PC-9 (cell line): ENCODE measurements at regions of chr1 and their contacts with region 1.

Region 1: DNA sequence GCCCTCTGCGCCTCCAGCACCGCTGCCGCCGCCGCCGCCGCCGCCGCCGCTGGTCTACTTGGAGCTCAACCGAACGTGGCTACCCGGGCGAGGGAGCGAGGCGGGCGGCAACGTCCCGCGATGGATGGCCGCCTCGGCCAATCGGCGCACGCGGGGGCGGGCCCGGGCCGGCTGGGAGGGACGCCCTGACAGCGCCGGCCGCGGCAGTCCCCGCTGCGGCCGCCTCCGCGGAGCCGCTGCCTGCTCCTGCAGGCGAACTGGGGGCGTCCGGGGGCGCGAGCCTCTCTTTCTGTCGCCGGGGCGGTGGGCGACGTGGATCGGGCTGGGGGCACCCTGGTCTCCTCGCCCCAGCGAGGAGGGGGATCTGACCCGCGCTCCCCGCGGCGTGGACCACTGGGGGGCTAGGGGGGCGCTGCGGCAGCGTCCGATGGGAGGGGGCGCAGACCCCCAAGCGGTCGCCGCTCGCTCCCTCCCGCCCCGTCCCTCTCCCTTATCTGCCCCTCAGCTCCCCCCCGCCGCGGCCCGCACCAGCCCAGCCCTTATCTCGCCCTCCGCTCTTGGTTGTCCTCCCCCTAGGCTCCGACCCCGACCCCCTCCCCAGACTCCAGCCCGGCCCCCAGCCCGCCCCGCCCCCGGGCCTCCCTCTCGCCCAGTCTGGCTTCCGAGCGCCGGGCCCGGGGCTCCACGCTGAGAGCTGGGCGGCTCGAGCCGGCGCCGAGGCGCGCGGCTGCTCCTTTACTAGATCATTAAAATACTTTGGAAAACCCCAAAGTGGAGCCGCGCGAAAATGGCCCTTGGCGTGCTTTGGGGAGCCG is at the start of gene SSBP3:
- DNase-seq: peak; percentile 76 to 97
- H3K4me3 ChIP-seq: peak within 1 kb of the TSS; percentile 61
- H3K27ac ChIP-seq: no peak within 1 kb of the TSS
- H3K4me1 ChIP-seq: peaks cover 22% of the 10 kb centered on the region
- H3K27me3 ChIP-seq: no peaks in the 10 kb centered on the region
- CTCF ChIP-seq: no peak
- total RNA-seq, gene SSBP3: 26.2 and 26.5 TPM in 2 replicates

Region 2: GRCh38 chr1:54070171-54070837 is 336.2 kb before region 1 on chr1:
- CTCF ChIA-PET with region 1: interaction called, 6 read pairs
- POLR2A ChIA-PET with region 1: no interaction called
- intact Hi-C with region 1: loop called (anchors 1 kb)
- DNase-seq: peak in 1 of 2 experiments; percentile 55
- H3K4me3 ChIP-seq: no peak overlapping the region
- H3K27ac ChIP-seq: no peak overlapping the region
- H3K4me1 ChIP-seq: no peaks in the 10 kb centered on the region
- H3K27me3 ChIP-seq: no peaks in the 10 kb centered on the region
- CTCF ChIP-seq: peak; percentile 77

Region 3: DNA sequence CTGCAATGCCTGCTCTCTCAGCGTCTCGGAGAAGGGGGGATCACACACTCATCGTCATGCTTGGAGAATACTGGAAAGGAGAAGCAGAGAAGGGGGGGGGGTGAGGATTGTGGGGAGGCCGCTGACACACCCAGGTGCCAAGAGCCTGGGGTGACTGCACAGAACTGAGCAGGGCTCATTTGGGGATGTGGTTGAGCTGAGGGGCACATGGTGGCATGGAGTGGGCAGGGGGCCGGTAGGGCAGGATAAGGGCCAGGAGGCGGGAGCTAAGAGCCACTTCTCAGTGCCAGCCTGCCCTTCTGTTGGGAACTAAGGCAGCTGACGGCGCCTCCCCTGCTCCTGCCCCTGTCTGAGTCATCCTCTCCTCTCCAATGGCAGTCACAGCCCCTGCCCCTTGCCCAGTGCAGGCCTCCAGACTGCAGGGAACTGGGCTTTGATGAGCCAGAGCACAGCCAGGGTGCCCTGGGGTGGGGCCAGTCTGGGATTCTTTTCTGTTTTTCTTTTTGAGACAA is 179.4 kb before region 1 on chr1:
- CTCF ChIA-PET with region 1: no interaction called
- POLR2A ChIA-PET with region 1: no interaction called
- intact Hi-C with region 1: loop called (anchors 2 kb)
- DNase-seq: peak; percentile 48 to 84
- H3K4me3 ChIP-seq: no peak overlapping the region
- H3K27ac ChIP-seq: no peak overlapping the region
- H3K4me1 ChIP-seq: 0 out of 2 replicates have a peak, but pooled peaks cover 5% of the 10 kb centered on the region
- H3K27me3 ChIP-seq: no peaks in the 10 kb centered on the region
- CTCF ChIP-seq: no peak

Region 4: DNA sequence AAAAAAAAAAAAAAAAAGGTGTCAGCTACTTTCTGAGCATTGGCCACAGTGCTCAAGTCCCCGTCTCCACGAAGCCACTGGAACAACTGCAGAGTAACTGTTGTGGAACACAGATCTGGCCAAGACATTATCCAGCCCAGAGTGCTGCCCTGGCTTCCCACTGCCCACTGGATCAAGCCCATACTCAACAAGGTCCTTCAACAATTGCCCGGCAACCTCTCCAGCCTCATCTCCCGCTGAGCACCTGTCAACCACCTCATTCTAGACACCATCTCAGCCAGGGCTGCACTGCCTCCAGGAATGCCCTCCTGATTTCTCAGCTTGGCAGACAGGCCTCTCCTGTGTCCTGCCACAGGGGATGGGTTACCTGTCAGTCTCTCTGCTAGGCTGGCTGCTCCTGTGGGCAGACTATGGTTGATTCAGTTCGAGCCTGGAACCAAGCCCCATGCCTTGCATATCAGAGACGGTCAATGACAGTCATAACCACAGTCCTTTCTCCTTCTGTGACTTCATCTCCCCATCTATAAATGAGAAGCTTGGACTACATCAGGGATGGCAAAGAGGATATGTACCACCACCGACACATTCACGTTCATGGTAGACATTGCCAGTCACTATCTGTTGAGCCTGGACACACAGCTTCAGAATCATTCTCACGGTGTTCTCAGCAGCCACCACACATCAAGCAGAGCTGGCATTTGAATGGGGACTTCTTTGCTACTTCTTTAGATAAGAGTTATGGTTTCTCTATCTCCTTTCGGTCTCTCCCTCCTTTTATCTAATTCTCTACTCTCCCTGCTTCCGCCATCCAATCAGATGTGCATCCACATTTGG is 129.7 kb before region 1 on chr1:
- CTCF ChIA-PET with region 1: interaction called, 15 read pairs
- POLR2A ChIA-PET with region 1: no interaction called
- intact Hi-C with region 1: no loop called
- DNase-seq: no peak
- H3K4me3 ChIP-seq: no peak overlapping the region
- H3K27ac ChIP-seq: no peak overlapping the region
- H3K4me1 ChIP-seq: no peaks in the 10 kb centered on the region
- H3K27me3 ChIP-seq: no peaks in the 10 kb centered on the region
- CTCF ChIP-seq: no peak

Region 5: DNA sequence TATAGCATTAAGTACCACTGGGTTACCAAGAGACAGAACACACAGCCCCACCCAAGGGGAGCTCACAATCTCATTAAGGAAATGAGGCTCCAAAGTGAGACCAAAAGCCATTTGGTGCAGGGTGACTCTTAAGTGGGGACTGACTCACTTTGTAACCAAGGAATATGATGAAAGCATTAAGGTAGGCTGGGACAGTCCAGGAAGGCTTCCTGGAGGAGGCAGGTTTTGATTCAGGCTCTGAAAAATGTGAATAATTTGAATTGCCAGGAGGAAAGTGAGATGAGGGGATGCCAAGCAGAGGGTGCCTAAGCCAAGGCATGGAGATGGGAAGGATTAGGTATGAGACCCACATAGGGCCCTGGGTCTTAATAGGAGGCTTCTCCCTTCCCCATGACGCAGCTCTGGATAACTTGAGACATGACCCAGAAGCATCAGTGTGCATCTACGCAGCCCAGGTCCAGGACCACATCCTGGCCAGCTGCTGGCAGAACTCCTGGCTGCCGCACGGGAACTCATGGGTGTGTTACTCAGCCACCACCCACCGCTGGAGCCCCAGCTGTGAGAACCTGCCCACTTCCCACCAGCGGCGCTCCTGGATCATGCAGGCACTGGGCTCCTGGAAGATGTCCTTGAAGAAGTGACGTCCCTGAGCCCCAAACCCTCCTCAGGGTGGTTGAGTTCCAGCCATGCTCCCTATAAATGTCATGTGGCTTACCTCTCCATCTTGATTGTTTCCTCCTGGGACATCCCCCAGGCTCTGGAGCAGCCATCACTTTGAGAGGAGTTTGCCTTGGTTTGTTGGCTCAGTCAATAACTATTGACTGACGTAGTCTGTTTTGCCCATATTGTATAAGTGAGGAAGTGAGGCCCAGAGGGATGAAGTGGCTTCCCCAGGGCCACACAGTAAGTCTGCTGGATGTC is 303.3 kb after region 1 on chr1:
- CTCF ChIA-PET with region 1: no interaction called
- POLR2A ChIA-PET with region 1: no interaction called
- intact Hi-C with region 1: no loop called
- DNase-seq: no peak
- H3K4me3 ChIP-seq: no peak overlapping the region
- H3K27ac ChIP-seq: no peak overlapping the region
- H3K4me1 ChIP-seq: no peaks in the 10 kb centered on the region
- H3K27me3 ChIP-seq: peaks cover 36% of the 10 kb centered on the region
- CTCF ChIP-seq: no peak

Region 6: GRCh38 chr1:54800899-54801759 is 394.6 kb after region 1 on chr1 and contains the start of gene TTC22:
- CTCF ChIA-PET with region 1: no interaction called
- POLR2A ChIA-PET with region 1: no interaction called
- intact Hi-C with region 1: loop called (anchors 5 kb)
- DNase-seq: peak; percentile 72 to 87
- H3K4me3 ChIP-seq: peak within 1 kb of the TSS; percentile 86
- H3K27ac ChIP-seq: peak within 1 kb of the TSS; percentile 76
- H3K4me1 ChIP-seq: peaks cover 79% of the 10 kb centered on the region
- H3K27me3 ChIP-seq: no peaks in the 10 kb centered on the region
- CTCF ChIP-seq: peak; percentile 72
- total RNA-seq, gene TTC22: 24.1 and 26.3 TPM in 2 replicates